Adrenal gland (tissue), 19 donors: ENCODE measurements at regions of chr7 and their contacts with region 1.

Region 1: GRCh38 chr7:39686261-39686924 is 63.0 kb downstream of the RALA start:
- DNase-seq: no peak
- H3K4me3 ChIP-seq: no peak overlapping the region
- H3K27ac ChIP-seq: peak overlapping the region in 1 of 5 donors; percentile 6
- H3K4me1 ChIP-seq: peaks cover 41 to 46% of the 10 kb centered on the region in 2 donors
- H3K27me3 ChIP-seq: no peaks in the 10 kb centered on the region
- CTCF ChIP-seq: no peak
- POLR2A ChIP-seq: no peak

Region 2: GRCh38 chr7:39642896-39643295 is 43.5 kb before region 1 on chr7:
- intact Hi-C with region 1: loop called in 1 of 2 experiments (anchors 2 kb)
- DNase-seq: no peak
- H3K4me3 ChIP-seq: no peak overlapping the region
- H3K27ac ChIP-seq: no peak overlapping the region
- H3K4me1 ChIP-seq: peaks cover 15 to 45% of the 10 kb centered on the region in 2 donors
- H3K27me3 ChIP-seq: no peaks in the 10 kb centered on the region
- CTCF ChIP-seq: no peak
- POLR2A ChIP-seq: no peak